Gastrocnemius medialis (tissue), 4 donors: ENCODE measurements at regions of chr2 and their contacts with region 1.

Region 1: GRCh38 chr2:23351388-23352141 is 33.4 kb upstream of the KLHL29 start:
- DNase-seq: peak; percentile 58 to 66
- ATAC-seq: peak; percentile 81 to 87
- H3K4me3 ChIP-seq: peak overlapping the region in 3 of 4 donors; percentile 20 to 45 (median 26)
- H3K27ac ChIP-seq: peak overlapping the region; percentile 18 to 42 (median 26)
- H3K4me1 ChIP-seq: peaks cover 7% of the 10 kb centered on the region in 2 donors
- H3K27me3 ChIP-seq: no peaks in the 10 kb centered on the region
- CTCF ChIP-seq: peak; percentile 52 to 92 (median 80)
- POLR2A ChIP-seq: no peak

Region 2: GRCh38 chr2:22355816-22356433 is 995.6 kb before region 1 on chr2:
- in situ Hi-C with region 1: loop called in 1 of 4 experiments (anchors 10 kb)
- intact Hi-C with region 1: no loop called
- DNase-seq: peak in 1 of 2 donors; percentile 23
- ATAC-seq: no peak
- H3K4me3 ChIP-seq: no peak overlapping the region
- H3K27ac ChIP-seq: no peak overlapping the region
- H3K4me1 ChIP-seq: no peaks in the 10 kb centered on the region
- H3K27me3 ChIP-seq: no peaks in the 10 kb centered on the region
- CTCF ChIP-seq: peak; percentile 34 to 70 (median 61)
- POLR2A ChIP-seq: no peak

Region 3: GRCh38 chr2:22991844-22992243 is 359.7 kb before region 1 on chr2:
- in situ Hi-C with region 1: no loop called
- intact Hi-C with region 1: loop called (anchors 5 kb)
- DNase-seq: no peak
- ATAC-seq: no peak
- H3K4me3 ChIP-seq: no peak overlapping the region
- H3K27ac ChIP-seq: no peak overlapping the region
- H3K4me1 ChIP-seq: no peaks in the 10 kb centered on the region
- H3K27me3 ChIP-seq: no peaks in the 10 kb centered on the region
- CTCF ChIP-seq: no peak
- POLR2A ChIP-seq: no peak

Region 4: DNA sequence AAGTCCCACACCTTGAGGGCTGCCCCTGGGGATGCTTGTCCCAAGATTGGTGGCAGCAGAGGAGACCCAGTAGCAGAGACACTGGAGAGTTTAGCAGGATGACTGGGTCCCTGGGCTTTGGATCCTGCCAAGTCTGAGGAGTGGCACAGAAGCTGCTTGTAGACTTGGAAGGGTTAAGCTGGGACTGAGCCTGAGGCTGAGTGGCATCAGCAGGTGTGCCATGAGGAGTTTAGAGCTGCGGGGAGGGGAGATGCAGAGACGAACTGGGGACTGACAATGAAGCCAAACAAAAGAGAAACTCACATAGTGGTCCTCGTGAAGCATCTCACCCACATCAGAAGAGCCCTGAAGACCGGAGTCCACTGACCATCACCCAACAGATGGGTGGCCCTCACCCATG is 296.3 kb before region 1 on chr2:
- in situ Hi-C with region 1: no loop called
- intact Hi-C with region 1: no loop called
- DNase-seq: no peak
- ATAC-seq: no peak
- H3K4me3 ChIP-seq: no peak overlapping the region
- H3K27ac ChIP-seq: no peak overlapping the region
- H3K4me1 ChIP-seq: no peaks in the 10 kb centered on the region
- H3K27me3 ChIP-seq: no peaks in the 10 kb centered on the region
- CTCF ChIP-seq: no peak
- POLR2A ChIP-seq: no peak

Region 5: GRCh38 chr2:23426263-23426905 is 74.8 kb after region 1 on chr2:
- in situ Hi-C with region 1: no loop called
- intact Hi-C with region 1: no loop called
- DNase-seq: peak; percentile 94 to 96
- ATAC-seq: peak; percentile 79
- H3K4me3 ChIP-seq: peak overlapping the region in 2 of 4 donors; percentile 14 to 29
- H3K27ac ChIP-seq: peak overlapping the region; percentile 80 to 97 (median 90)
- H3K4me1 ChIP-seq: peaks cover 30 to 43% of the 10 kb centered on the region in 2 donors
- H3K27me3 ChIP-seq: no peaks in the 10 kb centered on the region
- CTCF ChIP-seq: no peak
- POLR2A ChIP-seq: peak in 1 of 2 donors; percentile 10